Naive thymus-derived CD4-positive, alpha-beta T cell (primary cell): ENCODE measurements at regions of chr12 and their contacts with region 1.

Region 1: GRCh38 chr12:51103977-51104376 is 20.6 kb upstream of the CSRNP2 start:
- DNase-seq: no peak
- ATAC-seq: no peak
- H3K4me3 ChIP-seq: no peak overlapping the region
- H3K4me3 Mint-ChIP-seq: no peak overlapping the region
- H3K27ac ChIP-seq: no peak overlapping the region
- H3K27ac Mint-ChIP-seq: peak overlapping the region in 1 of 9 donors; percentile 9
- H3K4me1 ChIP-seq: no peaks in the 10 kb centered on the region
- H3K4me1 Mint-ChIP-seq: no peaks in the 10 kb centered on the region
- H3K27me3 ChIP-seq: no peaks in the 10 kb centered on the region
- H3K27me3 Mint-ChIP-seq: no peaks in the 10 kb centered on the region

Region 2: DNA sequence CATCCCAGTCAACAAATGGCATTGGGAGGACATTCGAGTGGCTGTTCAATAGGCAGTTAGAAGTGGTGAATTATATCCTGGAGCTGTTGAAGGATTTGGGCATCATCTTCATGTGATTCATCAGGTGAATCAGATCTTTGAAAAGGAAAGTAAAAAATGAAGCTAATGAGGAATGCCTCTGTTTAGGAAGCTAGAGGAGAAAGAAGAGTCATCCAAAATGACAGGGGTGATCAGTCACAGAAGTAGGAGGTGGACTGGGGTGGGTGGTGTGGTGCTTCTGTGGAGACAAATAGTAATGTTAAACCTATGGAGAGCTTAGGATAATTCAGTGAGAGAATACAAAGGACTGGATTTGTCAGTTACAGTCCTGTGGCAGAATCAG is 566.4 kb before region 1 on chr12:
- CTCF ChIA-PET with region 1: no interaction called
- POLR2A ChIA-PET with region 1: no interaction called
- intact Hi-C with region 1: no loop called
- DNase-seq: no peak
- ATAC-seq: no peak
- H3K4me3 ChIP-seq: no peak overlapping the region
- H3K4me3 Mint-ChIP-seq: peak overlapping the region in 2 of 10 donors; percentile 1 to 30
- H3K27ac ChIP-seq: no peak overlapping the region
- H3K27ac Mint-ChIP-seq: peak overlapping the region in 7 of 9 donors; percentile 4 to 64 (median 26)
- H3K4me1 ChIP-seq: peaks cover 7 to 20% of the 10 kb centered on the region in 2 donors
- H3K4me1 Mint-ChIP-seq: peaks cover 16 to 49% (median 33%) of the 10 kb centered on the region in 7 donors
- H3K27me3 ChIP-seq: no peaks in the 10 kb centered on the region
- H3K27me3 Mint-ChIP-seq: no peaks in the 10 kb centered on the region

Region 3: GRCh38 chr12:51056244-51056643 is 47.7 kb before region 1 on chr12:
- CTCF ChIA-PET with region 1: no interaction called
- POLR2A ChIA-PET with region 1: no interaction called
- intact Hi-C with region 1: loop called in 1 of 2 experiments (anchors 1 kb)
- DNase-seq: no peak
- ATAC-seq: peak; percentile 27
- H3K4me3 ChIP-seq: no peak overlapping the region
- H3K4me3 Mint-ChIP-seq: no peak overlapping the region
- H3K27ac ChIP-seq: no peak overlapping the region
- H3K27ac Mint-ChIP-seq: peak overlapping the region in 1 of 9 donors; percentile 49
- H3K4me1 ChIP-seq: no peaks in the 10 kb centered on the region
- H3K4me1 Mint-ChIP-seq: peaks cover 2 to 11% (median 6%) of the 10 kb centered on the region in 7 donors
- H3K27me3 ChIP-seq: no peaks in the 10 kb centered on the region
- H3K27me3 Mint-ChIP-seq: no peaks in the 10 kb centered on the region

Region 4: GRCh38 chr12:51139292-51139844 is 35.4 kb after region 1 on chr12:
- CTCF ChIA-PET with region 1: no interaction called
- POLR2A ChIA-PET with region 1: no interaction called
- intact Hi-C with region 1: no loop called
- DNase-seq: no peak
- ATAC-seq: no peak
- H3K4me3 ChIP-seq: no peak overlapping the region
- H3K4me3 Mint-ChIP-seq: no peak overlapping the region
- H3K27ac ChIP-seq: no peak overlapping the region
- H3K27ac Mint-ChIP-seq: peak overlapping the region in 2 of 9 donors; percentile 26 to 39
- H3K4me1 ChIP-seq: no peaks in the 10 kb centered on the region
- H3K4me1 Mint-ChIP-seq: peaks cover 0 to 15% (median 11%) of the 10 kb centered on the region in 7 donors
- H3K27me3 ChIP-seq: no peaks in the 10 kb centered on the region
- H3K27me3 Mint-ChIP-seq: no peaks in the 10 kb centered on the region